ENCODE measurements at regions of chr12 and their contacts with region 1.

Region 1: DNA sequence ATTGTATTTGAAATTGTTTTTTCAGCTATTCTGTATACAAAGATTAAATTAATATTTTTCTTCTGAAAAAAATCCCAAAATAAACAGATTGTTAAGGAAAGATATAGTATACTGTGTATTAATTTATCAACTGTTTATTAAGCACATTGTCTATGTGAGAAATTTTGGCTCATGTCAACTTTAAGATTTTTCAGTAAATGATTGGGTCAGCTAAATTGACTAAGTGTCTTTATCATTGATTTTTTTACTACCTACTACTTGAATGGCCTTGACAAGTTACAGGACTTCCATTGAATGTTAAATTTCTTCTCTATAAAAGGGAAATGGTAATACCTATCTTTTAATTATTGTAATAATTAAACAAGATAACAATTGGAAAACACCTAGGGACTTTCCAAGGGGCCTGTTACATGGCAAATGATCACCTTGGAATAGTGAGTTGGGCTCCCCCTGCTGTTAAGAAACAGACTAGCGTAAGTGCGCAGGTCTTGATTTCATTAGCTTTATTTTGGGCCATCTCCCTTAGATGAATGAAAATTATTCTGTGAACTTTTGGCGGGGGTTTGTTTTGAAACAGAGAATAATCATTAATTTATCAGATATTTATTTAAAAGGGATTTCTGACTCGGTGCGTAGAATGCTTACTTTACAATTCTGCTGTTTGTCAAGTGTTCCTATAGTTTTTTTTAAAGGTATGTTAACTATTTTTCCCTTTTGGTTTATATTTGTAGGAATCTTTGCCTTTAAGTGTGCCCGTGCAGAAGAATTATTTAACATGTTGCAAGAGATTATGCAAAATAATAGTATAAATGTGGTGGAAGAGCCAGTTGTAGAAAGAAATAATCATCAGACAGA is 14.5 kb upstream of the CCT2 start:
- DNase-seq: peak; percentile 62 to 83
- ATAC-seq: peak in 1 of 2 experiments; percentile 74; a peak in 3 of 6 replicates
- H3K4me3 ChIP-seq: peak overlapping the region; percentile 22; the same call in 1 of the 3 replicates
- H3K27ac ChIP-seq: peak overlapping the region; percentile 74 to 89
- H3K4me1 ChIP-seq: peaks cover 39% of the 10 kb centered on the region
- CTCF ChIP-seq: peak; percentile 91
- EP300 ChIP-seq: no peak
- POLR2A ChIP-seq: no peak
- RAD21 ChIP-seq: peak; percentile 81 to 88

Region 2: GRCh38 chr12:69388371-69388770 is 182.4 kb before region 1 on chr12:
- CTCF ChIA-PET with region 1: interaction called, 78 read pairs
- POLR2A ChIA-PET with region 1: no interaction called
- DNase-seq: peak; percentile 11 to 68
- ATAC-seq: peak; percentile 68 to 77; a peak in 5 of 6 replicates
- H3K4me3 ChIP-seq: no peak overlapping the region
- H3K27ac ChIP-seq: peak overlapping the region; percentile 6 to 62; a peak in 3 of 6 replicates
- H3K4me1 ChIP-seq: peaks cover 32% of the 10 kb centered on the region
- CTCF ChIP-seq: peak; percentile 78
- EP300 ChIP-seq: no peak
- POLR2A ChIP-seq: no peak
- RAD21 ChIP-seq: peak; percentile 81 to 83

Region 3: GRCh38 chr12:69497308-69498026 is 73.3 kb before region 1 on chr12:
- CTCF ChIA-PET with region 1: interaction called, 11 read pairs
- POLR2A ChIA-PET with region 1: no interaction called
- DNase-seq: no peak
- ATAC-seq: peak; percentile 33 to 35; a peak in 4 of 6 replicates
- H3K4me3 ChIP-seq: no peak overlapping the region
- H3K27ac ChIP-seq: peak overlapping the region in 1 of 2 experiments; percentile 14; a peak in 1 of 6 replicates
- H3K4me1 ChIP-seq: peaks cover 49% of the 10 kb centered on the region
- CTCF ChIP-seq: no peak
- EP300 ChIP-seq: no peak
- POLR2A ChIP-seq: no peak
- RAD21 ChIP-seq: no peak

Region 4: GRCh38 chr12:69519871-69520270 is 50.9 kb before region 1 on chr12:
- CTCF ChIA-PET with region 1: no interaction called
- POLR2A ChIA-PET with region 1: no interaction called
- DNase-seq: no peak
- ATAC-seq: no peak
- H3K4me3 ChIP-seq: no peak overlapping the region
- H3K27ac ChIP-seq: no peak overlapping the region
- H3K4me1 ChIP-seq: peaks cover 16% of the 10 kb centered on the region
- CTCF ChIP-seq: no peak
- EP300 ChIP-seq: no peak
- POLR2A ChIP-seq: no peak
- RAD21 ChIP-seq: no peak

Region 5: GRCh38 chr12:69555461-69555860 is 15.3 kb before region 1 on chr12:
- CTCF ChIA-PET with region 1: interaction called, 26 read pairs
- POLR2A ChIA-PET with region 1: interaction called, 4 read pairs
- DNase-seq: peak; percentile 51
- ATAC-seq: peak; percentile 77 to 86; a peak in 5 of 6 replicates
- H3K4me3 ChIP-seq: no peak overlapping the region
- H3K27ac ChIP-seq: peak overlapping the region; percentile 2 to 3; a peak in 1 of 6 replicates
- H3K4me1 ChIP-seq: peaks cover 42% of the 10 kb centered on the region
- CTCF ChIP-seq: no peak
- EP300 ChIP-seq: no peak
- POLR2A ChIP-seq: no peak
- RAD21 ChIP-seq: no peak

Region 6: GRCh38 chr12:69595689-69596088 is 24.9 kb after region 1 on chr12:
- CTCF ChIA-PET with region 1: no interaction called
- POLR2A ChIA-PET with region 1: no interaction called
- DNase-seq: peak in 1 of 2 experiments; percentile 22
- ATAC-seq: peak; percentile 39 to 78; a peak in 5 of 6 replicates
- H3K4me3 ChIP-seq: no peak overlapping the region
- H3K27ac ChIP-seq: no peak overlapping the region
- H3K4me1 ChIP-seq: no peaks in the 10 kb centered on the region
- CTCF ChIP-seq: 0 out of 3 replicates have a peak, but pooled peaks have one; percentile 14
- EP300 ChIP-seq: no peak
- POLR2A ChIP-seq: no peak
- RAD21 ChIP-seq: no peak